ENCODE measurements at regions of chr1 and their contacts with region 1.

Region 1: DNA sequence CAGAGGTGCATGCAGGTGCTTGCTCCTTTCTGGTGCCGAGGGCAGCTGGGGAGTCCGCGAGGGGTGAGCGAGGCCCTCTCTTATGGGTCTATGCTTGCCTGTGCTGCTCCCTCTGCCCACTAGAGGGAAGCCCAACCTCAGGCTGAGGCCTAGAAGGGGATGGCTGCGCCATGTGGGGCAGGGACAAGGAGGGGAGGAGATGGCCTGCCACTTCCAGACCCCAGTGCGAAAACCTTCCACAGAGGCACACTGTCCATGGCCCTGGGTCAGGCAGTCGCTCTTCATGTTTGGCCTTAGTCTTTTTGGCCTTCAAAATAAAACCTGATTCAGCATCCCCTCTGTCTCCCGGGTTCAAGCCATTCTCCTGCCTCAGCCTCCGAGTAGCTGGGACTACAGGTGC is 14.0 kb downstream of the RHBG start:
- DNase-seq: peak; percentile 58 to 84
- ATAC-seq: peak; percentile 70
- H3K4me3 ChIP-seq: no peak overlapping the region
- H3K27ac ChIP-seq: no peak overlapping the region
- H3K4me1 ChIP-seq: no peaks in the 10 kb centered on the region
- H3K27me3 ChIP-seq: no peaks in the 10 kb centered on the region

Region 2: DNA sequence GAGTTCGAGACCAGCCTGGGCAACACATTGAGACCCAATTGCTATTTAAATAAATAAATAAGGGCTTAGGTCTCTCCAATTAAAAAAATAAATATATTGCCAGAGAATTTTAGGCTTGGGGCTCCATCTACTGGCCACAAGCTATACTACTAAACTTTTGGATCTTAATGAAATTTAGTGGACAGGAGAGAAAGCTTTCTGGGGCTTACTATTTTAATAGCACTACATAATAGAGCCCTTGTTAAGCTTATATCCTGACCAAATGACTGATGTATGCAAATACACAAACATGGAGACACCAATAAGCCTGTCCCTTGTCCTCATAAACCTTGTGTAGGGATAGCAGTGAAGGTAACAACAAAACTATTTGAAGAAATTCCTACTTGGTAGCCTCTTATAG is 63.4 kb before region 1 on chr1:
- intact Hi-C with region 1: no loop called
- DNase-seq: no peak
- ATAC-seq: no peak
- H3K4me3 ChIP-seq: no peak overlapping the region
- H3K27ac ChIP-seq: no peak overlapping the region
- H3K4me1 ChIP-seq: no peaks in the 10 kb centered on the region
- H3K27me3 ChIP-seq: no peaks in the 10 kb centered on the region

Region 3: DNA sequence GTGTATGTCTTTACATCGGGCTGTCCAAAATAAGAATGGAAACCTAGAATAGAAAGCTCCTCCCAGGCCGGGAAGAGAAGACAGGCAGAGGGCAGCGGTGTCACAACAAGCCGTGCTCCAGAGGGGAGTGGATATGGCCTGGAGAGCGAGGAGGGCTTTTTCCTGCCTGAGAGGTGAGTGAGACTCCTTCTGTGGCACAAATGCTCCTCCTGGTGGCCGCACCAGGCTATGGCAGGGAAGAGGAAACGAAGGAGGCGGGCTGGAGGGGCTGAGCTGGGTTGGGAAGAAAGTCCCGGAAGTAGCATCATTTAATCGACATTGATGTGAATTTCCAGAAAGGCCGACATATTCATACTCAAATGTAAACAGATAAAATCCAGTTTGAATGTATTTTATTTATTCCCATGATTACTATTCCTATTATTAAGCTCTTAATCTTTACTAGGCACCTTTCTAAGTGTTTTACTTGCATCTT is 62.8 kb after region 1 on chr1:
- intact Hi-C with region 1: loop called (anchors 2 kb)
- DNase-seq: peak; percentile 84 to 94
- ATAC-seq: peak; percentile 92
- H3K4me3 ChIP-seq: no peak overlapping the region
- H3K27ac ChIP-seq: no peak overlapping the region
- H3K4me1 ChIP-seq: no peaks in the 10 kb centered on the region
- H3K27me3 ChIP-seq: no peaks in the 10 kb centered on the region

Region 4: DNA sequence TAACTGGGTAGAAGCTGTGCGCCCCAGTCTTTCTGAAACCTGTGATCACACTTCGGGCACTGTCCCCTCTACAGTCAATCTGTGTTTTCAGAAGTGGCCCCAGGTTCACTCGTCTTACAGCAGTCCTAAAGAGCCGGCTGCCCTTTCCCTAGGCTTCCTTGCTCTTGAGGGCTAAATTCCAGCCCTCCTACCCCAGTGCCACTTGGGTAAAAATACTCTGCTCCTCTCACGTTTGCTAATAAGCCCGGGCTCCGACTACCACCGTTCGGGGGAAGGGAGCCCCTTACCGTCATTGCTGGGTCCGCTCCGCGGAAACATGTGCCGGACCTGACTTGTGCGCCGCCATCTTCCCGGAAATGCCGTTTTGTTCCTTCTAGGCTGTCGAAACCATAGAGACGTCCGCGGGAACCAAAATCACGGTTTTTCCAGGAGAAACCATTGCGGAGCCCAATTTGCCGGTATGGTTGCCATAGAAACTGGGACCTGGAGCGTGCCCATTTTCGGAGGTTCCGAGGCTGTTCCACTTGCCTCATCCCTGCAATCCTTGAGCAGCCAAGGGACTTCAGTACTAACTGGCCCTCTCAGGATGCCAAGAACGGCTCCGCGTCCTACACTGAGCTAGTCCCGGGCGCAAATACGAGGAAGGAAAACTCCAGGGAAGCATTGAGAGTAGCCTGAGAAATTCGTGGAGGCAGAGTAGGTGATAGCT is 218.3 kb after region 1 on chr1 and contains the start of gene GPATCH4:
- intact Hi-C with region 1: loop called in 1 of 2 experiments (anchors 10 kb)
- DNase-seq: peak; percentile 89 to 90
- ATAC-seq: peak; percentile 94
- H3K4me3 ChIP-seq: peak within 1 kb of the TSS; percentile 56
- H3K27ac ChIP-seq: peak within 1 kb of the TSS in 1 of 2 donors; percentile 67
- H3K4me1 ChIP-seq: no peaks in the 10 kb centered on the region
- H3K27me3 ChIP-seq: no peaks in the 10 kb centered on the region
- total RNA-seq, gene GPATCH4: 15.6 to 24.0 TPM

Region 5: GRCh38 chr1:156618853-156619581 is 236.0 kb after region 1 on chr1 and contains the start of gene HAPLN2:
- intact Hi-C with region 1: loop called in 1 of 2 experiments (anchors 10 kb)
- DNase-seq: no peak
- ATAC-seq: no peak
- H3K4me3 ChIP-seq: no peak within 1 kb of the TSS
- H3K27ac ChIP-seq: no peak within 1 kb of the TSS
- H3K4me1 ChIP-seq: no peaks in the 10 kb centered on the region
- H3K27me3 ChIP-seq: peaks cover 0 to 1% of the 10 kb centered on the region in 2 donors
- total RNA-seq, gene HAPLN2: 0.39 to 0.94 TPM